Heart left ventricle (tissue), 16 donors: ENCODE measurements at regions of chr4 and their contacts with region 1.

Region 1: DNA sequence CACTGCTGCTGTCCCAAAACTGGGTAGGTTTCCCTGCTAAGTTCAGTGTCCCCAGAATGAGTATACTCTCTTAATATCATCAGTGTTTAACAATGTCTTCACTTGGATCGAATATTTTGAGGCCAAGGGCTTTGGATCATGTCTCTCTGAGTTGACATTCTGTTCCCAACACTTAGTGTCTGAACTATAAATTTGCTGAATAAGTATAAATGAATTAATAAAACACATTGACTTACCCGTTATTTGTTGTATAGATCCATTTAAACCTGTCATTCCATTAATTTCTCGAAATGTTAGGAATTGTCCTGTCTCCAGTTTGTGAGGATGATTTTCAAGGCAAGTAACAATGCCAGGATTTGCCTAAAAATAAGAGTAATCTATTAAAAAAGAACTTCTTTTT is 32.6 kb downstream of the UBA6 start:
- DNase-seq: no peak
- ATAC-seq: no peak
- H3K4me3 ChIP-seq: no peak overlapping the region
- H3K27ac ChIP-seq: no peak overlapping the region
- H3K4me1 ChIP-seq: no peaks in the 10 kb centered on the region
- H3K27me3 ChIP-seq: no peaks in the 10 kb centered on the region
- CTCF ChIP-seq: no peak
- POLR2A ChIP-seq: no peak

Region 2: DNA sequence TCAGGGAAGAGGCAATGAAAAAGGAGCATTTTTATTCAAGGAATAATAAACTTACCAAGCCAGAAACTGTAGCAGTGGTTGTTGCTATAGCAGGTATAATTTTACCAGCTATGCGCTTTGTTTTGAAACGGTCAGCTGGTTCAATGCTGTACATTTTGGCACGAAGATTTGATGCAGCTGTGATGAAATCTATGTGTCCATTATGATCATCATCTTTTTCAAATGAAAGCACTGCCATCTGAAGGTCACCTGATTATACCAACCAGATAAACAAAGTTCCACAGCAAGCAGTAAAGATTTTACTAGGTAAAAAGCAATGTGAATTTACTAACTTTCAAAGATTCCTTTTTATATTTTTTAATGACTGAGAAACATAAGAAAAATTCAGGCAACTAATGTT is 43.4 kb before region 1 on chr4:
- intact Hi-C with region 1: loop called in 1 of 10 experiments (anchors 5 kb)
- DNase-seq: no peak
- ATAC-seq: no peak
- H3K4me3 ChIP-seq: no peak overlapping the region
- H3K27ac ChIP-seq: no peak overlapping the region
- H3K4me1 ChIP-seq: no peaks in the 10 kb centered on the region
- H3K27me3 ChIP-seq: no peaks in the 10 kb centered on the region
- CTCF ChIP-seq: no peak
- POLR2A ChIP-seq: no peak